Posterior vena cava (tissue), 2 donors: ENCODE measurements at regions of chr1 and their contacts with region 1.

Region 1: DNA sequence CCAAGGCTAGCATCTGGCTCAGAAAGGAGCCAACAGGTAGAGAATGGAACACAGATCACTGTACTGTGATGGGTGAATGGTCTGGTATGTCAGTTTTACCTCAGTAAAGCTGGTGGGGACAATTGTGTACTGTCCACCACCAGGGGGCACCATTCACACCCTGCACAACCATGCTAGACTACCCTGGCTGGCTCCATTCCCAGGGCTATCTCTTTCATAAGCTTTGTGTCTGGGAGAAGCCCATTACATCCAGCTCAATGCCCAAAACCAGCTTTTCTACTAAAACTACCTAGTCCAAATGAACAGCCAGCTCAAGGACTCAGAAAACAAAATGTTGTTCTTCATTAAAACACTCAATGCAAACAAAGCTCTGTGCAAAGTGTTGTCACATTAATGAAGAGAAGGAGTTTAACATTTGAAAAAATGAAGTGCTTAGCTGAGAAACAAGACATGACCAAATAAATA is 62.0 kb upstream of the RASAL2 start:
- DNase-seq: peak; percentile 93

Region 2: DNA sequence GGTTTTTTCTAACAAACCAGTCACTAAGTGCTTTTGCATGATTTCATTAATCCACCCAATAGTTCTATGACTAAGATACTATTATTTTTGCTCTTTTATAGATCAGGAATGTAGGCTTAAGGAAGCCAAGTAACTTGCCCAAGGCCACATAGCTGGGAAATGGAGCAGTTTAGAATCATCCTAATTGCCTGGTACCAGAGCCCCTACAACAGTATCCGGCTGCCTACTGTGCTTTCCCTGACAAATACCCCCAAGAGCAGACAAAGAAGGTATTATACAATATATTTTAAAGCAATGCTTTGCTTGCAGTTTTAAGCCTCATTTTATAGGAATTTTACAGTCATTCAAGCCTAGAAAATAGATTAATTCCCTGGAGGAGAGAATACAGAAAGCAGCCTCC is 16.5 kb after region 1 on chr1:
- intact Hi-C with region 1: loop called in 1 of 2 experiments (anchors 1 kb)
- DNase-seq: no peak

Region 3: DNA sequence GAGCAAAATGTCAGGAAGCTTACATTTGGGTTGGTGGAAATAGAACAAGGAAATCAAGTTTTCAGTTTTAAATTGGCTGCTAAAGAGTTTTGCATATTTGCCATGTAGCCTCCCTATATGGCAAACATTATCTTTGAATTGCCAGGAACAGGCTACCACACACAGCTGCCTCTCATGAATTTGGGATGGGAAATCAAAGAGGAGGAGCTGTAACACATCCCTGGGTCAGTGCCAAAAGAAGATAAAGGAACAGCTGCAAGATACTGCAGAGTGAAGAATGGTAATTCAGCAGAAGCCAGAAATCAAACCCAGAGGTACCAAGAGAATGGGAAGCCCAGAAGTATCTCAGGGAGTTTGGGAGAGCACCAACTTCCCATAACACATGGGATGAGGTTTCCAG is 43.4 kb after region 1 on chr1:
- intact Hi-C with region 1: no loop called
- DNase-seq: no peak

Region 4: DNA sequence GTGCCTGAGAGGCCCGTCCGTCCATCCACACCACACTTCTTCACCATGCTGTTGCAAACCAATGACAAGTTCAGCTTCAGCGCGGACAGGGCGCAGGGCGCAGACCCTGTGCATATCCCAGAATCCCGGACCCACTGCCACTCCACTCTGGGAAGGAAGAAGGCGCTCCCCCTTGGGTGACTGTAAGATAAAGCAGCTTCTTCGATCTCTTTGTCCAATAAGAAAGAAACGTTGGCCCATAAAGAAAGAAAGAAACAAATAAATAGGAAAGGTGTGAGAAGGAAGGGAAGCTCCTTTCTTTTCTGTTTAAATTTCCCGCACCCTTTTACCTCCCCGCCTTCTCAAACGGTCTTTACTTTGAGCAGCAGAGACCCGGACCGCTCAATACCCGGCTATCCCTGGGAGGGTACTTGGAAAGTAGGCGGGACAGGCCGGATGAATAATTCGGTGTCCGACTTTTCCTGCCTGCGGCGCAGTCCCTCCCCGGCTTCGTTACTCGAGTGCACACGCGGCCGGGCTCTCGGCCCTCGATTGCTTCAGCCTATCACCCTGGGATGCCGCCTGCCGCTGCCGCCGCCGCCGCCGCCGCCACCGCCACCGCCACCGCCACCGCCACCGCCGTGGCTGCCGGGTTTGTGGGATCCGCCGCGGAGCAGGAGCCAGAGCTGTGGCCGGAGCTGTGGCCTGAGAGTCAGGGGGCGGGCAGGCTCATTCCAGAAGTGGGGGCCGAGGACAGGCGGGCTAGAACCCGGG is 61.5 kb after region 1 on chr1:
- intact Hi-C with region 1: loop called in 1 of 2 experiments (anchors 10 kb)
- DNase-seq: peak; percentile 97

Region 5: GRCh38 chr1:178189814-178190213 is 157.9 kb after region 1 on chr1:
- intact Hi-C with region 1: loop called in 1 of 2 experiments (anchors 10 kb)
- DNase-seq: no peak

Region 6: GRCh38 chr1:178282949-178283367 is 251.1 kb after region 1 on chr1:
- intact Hi-C with region 1: loop called in 1 of 2 experiments (anchors 10 kb)
- DNase-seq: no peak